ENCODE measurements at regions of chr16 and their contacts with region 1.

Region 1: DNA sequence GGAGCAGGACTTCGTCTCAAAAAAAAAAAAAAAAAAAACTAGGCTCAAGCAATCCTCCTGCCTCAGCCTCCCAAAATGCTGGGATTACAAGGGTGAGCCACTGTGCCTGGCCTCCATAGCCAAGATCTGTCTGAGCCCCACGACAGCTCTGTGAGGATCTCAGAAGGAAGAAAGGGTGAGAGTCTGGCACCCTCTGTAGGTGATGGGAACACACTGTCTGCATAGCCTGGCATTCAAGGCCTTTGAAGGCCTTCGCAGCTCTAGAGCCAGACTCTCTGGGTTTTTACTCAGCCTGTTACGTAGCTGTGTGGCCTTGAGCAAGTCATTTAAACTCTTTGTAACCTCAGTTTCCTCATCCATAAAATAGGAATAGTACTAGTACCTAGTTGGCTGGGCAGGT is 6.3 kb upstream of the XPO6 start:
- DNase-seq: no peak
- ATAC-seq: peak; percentile 100
- H3K4me3 ChIP-seq: no peak overlapping the region
- H3K27ac ChIP-seq: no peak overlapping the region
- H3K4me1 ChIP-seq: no peaks in the 10 kb centered on the region
- H3K27me3 ChIP-seq: no peaks in the 10 kb centered on the region
- CTCF ChIP-seq: peak; percentile 73 to 85 (median 80)
- EP300 ChIP-seq: no peak
- POLR2A ChIP-seq: no peak
- RAD21 ChIP-seq: peak; percentile 87

Region 2: DNA sequence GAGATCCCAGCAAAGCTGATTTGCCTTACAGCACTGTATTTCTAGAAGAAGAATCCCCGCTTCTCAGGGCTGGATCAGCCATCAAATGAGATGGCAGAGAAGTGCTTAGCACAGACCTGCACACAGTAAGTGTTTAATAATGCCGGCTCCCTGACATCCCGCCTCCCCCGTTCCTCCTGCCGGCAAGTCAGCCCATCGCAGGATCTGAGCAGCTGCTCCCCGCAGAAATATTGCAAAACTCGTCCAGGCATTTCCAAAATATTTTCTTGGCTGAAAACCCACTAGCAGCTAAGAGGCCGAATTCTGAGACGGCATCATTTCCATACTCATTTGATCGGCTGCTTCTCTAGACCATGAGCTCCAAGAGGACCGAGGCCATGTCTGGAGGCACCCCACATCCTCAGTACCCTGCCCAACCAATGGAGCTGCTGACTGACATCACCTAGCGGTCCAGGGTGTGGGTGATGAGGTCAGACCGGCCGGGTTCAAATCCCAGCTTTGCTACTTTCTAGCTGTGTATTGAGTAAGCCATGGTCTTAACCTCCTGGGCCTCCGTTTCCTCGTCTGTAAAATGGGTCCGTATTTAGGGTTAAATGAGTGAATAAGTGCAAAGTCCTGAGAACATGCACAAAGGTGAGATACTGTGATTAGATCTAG is 416.7 kb before region 1 on chr16:
- CTCF ChIA-PET with region 1: no interaction called
- POLR2A ChIA-PET with region 1: no interaction called
- RAD21 ChIA-PET with region 1: no interaction called
- SMC1A ChIA-PET with region 1: no interaction called
- in situ Hi-C with region 1: no loop called
- intact Hi-C with region 1: no loop called
- DNase-seq: no peak
- ATAC-seq: no peak
- H3K4me3 ChIP-seq: no peak overlapping the region
- H3K27ac ChIP-seq: no peak overlapping the region
- H3K4me1 ChIP-seq: no peaks in the 10 kb centered on the region
- H3K27me3 ChIP-seq: no peaks in the 10 kb centered on the region; a peak in 2 of 4 replicates
- CTCF ChIP-seq: no peak
- EP300 ChIP-seq: no peak
- POLR2A ChIP-seq: no peak
- RAD21 ChIP-seq: no peak

Region 3: DNA sequence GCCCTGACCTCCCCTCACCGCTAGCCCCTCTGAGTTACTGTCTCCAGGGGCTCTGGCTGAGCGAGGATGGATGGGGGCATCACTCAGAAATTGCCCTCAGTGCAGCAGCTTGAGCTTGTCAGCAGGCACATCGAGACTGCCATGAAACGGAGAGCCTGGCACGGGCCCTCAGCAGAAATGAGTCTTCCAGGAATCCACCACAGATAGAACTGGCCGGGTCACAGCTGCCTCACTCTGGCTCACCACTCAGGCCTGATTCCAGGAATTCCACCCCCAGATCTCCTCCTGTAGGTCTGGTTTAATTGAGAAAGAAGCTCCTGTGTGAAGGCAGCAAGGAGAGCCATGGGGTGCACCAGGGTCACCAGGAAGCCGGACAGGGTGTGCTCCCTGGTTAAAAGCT is 240.1 kb before region 1 on chr16:
- CTCF ChIA-PET with region 1: interaction called, 51 read pairs
- POLR2A ChIA-PET with region 1: no interaction called
- RAD21 ChIA-PET with region 1: interaction called, 34 read pairs
- SMC1A ChIA-PET with region 1: interaction called, 18 read pairs
- in situ Hi-C with region 1: loop called (anchors 5 kb)
- intact Hi-C with region 1: no loop called
- DNase-seq: no peak
- ATAC-seq: no peak
- H3K4me3 ChIP-seq: no peak overlapping the region
- H3K27ac ChIP-seq: no peak overlapping the region
- H3K4me1 ChIP-seq: no peaks in the 10 kb centered on the region
- H3K27me3 ChIP-seq: no peaks in the 10 kb centered on the region
- CTCF ChIP-seq: no peak
- EP300 ChIP-seq: no peak
- POLR2A ChIP-seq: no peak
- RAD21 ChIP-seq: no peak

Region 4: GRCh38 chr16:28069971-28070794 is 147.9 kb before region 1 on chr16:
- CTCF ChIA-PET with region 1: interaction called, 28 read pairs
- POLR2A ChIA-PET with region 1: no interaction called
- RAD21 ChIA-PET with region 1: interaction called, 21 read pairs
- SMC1A ChIA-PET with region 1: interaction called, 14 read pairs
- in situ Hi-C with region 1: no loop called
- intact Hi-C with region 1: no loop called
- DNase-seq: no peak
- ATAC-seq: no peak
- H3K4me3 ChIP-seq: no peak overlapping the region
- H3K27ac ChIP-seq: no peak overlapping the region
- H3K4me1 ChIP-seq: no peaks in the 10 kb centered on the region
- H3K27me3 ChIP-seq: no peaks in the 10 kb centered on the region; a peak in 1 of 4 replicates
- CTCF ChIP-seq: no peak
- EP300 ChIP-seq: no peak
- POLR2A ChIP-seq: no peak
- RAD21 ChIP-seq: no peak

Region 5: GRCh38 chr16:28164140-28164539 is 54.0 kb before region 1 on chr16:
- CTCF ChIA-PET with region 1: interaction called, 15 read pairs
- POLR2A ChIA-PET with region 1: no interaction called
- RAD21 ChIA-PET with region 1: interaction called, 4 read pairs
- SMC1A ChIA-PET with region 1: interaction called, 5 read pairs
- in situ Hi-C with region 1: no loop called
- intact Hi-C with region 1: no loop called
- DNase-seq: no peak
- ATAC-seq: no peak
- H3K4me3 ChIP-seq: no peak overlapping the region
- H3K27ac ChIP-seq: no peak overlapping the region
- H3K4me1 ChIP-seq: no peaks in the 10 kb centered on the region; the same call in 1 of the 2 replicates
- H3K27me3 ChIP-seq: no peaks in the 10 kb centered on the region
- CTCF ChIP-seq: no peak
- EP300 ChIP-seq: no peak
- POLR2A ChIP-seq: no peak
- RAD21 ChIP-seq: no peak

Region 6: DNA sequence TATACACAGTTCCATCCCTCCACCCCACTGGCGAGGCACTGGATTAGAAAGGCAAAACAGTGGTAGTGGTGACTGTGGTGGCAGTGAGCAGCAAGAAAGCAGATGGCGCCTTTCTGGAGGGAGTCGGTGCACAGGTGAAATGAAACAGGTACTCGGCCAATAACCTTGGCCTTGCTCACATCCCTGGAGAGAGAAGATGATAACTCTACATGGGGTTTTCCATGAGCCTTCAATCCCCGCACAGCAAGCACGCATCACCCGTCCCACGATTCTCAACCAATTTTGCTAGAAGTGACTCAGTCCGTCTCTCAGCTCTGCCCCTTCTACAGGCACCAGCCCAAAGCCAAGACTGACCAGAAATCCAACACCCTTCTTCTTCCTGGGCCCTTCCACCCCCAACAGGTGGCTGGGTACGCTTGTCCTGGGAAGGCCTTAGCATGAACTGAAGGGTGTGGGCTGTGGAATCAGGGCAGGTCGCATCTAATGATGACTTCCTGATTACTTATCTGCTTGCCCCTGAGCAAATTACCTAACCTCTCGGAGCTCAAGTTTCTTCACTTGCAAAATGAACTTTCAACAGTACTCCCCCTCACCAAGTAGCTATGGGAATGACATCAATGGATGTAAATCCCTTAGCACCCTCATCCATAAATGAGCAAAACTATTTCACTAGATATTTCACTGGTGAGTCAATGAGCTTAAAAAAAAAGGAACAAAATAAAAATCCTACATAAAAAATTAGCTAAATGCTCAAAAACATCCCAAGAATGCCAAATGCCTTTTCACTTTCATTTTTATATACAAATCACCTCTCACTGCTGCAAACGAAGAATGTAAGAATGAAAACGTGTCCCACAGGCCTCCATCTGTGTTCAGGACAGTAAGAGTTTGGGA is 24.3 kb before region 1 on chr16:
- CTCF ChIA-PET with region 1: interaction called, 91 read pairs
- POLR2A ChIA-PET with region 1: interaction called, 6 read pairs
- RAD21 ChIA-PET with region 1: interaction called, 192 read pairs
- SMC1A ChIA-PET with region 1: interaction called, 272 read pairs
- in situ Hi-C with region 1: no loop called
- intact Hi-C with region 1: no loop called
- DNase-seq: no peak
- ATAC-seq: peak; percentile 52
- H3K4me3 ChIP-seq: peak overlapping the region; percentile 48; the same call in 1 of the 2 replicates
- H3K27ac ChIP-seq: peak overlapping the region; percentile 86
- H3K4me1 ChIP-seq: peaks cover 49% of the 10 kb centered on the region
- H3K27me3 ChIP-seq: no peaks in the 10 kb centered on the region
- CTCF ChIP-seq: no peak
- EP300 ChIP-seq: no peak
- POLR2A ChIP-seq: peak; percentile 10; the same call in 1 of the 2 replicates
- RAD21 ChIP-seq: no peak

Measured in GM12878 (cell line).